Kidney (tissue), 22 donors: ENCODE measurements at regions of chr6 and their contacts with region 1.

Region 1: GRCh38 chr6:16332175-16332542 is 93.8 kb downstream of the GMPR start:
- DNase-seq: peak; percentile 84 to 93 (median 85)
- H3K4me3 ChIP-seq: no peak overlapping the region
- H3K27ac ChIP-seq: peak overlapping the region in 1 of 2 donors; percentile 49
- H3K4me1 ChIP-seq: peaks cover 0 to 5% (median 3%) of the 10 kb centered on the region in 3 donors
- H3K27me3 ChIP-seq: no peaks in the 10 kb centered on the region
- CTCF ChIP-seq: peak; percentile 84

Region 2: DNA sequence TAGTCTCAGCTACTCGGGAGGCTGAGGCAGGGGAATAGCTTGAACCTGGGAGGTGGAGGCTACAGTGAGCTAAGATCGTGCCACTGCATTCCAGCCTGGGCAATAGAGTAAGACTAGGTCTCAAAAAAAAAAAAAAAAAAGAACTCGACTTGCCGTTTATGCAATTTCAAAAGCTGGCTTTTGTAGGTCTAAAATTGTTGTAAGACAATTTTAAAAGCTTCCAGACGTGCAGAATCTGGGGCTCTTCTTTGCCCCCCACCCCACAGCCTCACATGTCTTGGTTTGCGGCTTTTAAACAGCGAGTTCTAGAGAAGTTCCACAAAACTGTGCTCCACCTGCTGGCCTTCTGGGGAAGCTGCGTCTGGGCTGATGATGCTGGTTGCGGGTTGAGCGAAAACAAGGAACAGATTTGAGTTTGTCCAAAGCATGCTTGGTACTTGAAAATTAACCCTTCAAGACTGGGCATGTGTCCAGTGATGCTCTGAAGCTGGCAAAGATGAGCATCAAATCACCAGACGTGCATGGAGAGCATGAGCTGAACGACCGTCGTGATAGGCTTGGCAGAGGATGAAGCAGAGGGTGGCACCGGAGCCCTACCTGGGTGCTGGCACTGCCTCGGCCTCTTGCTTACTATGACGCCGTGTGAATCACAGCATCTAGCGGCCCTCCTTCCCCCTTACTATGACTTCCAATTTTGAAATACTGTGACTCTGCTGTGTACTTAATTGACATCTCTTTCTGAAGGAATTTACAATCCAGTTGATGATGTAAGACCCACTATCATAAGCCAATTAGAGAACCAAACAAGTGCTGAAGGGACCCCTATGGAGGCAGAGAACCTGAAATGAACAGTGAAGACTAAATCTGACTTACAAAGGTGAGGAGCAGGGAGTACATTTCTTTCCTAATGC is 77.6 kb after region 1 on chr6:
- intact Hi-C with region 1: loop called (anchors 5 kb)
- DNase-seq: peak in 4 of 5 donors; percentile 63 to 87 (median 70)
- H3K4me3 ChIP-seq: no peak overlapping the region
- H3K27ac ChIP-seq: no peak overlapping the region
- H3K4me1 ChIP-seq: no peaks in the 10 kb centered on the region
- H3K27me3 ChIP-seq: no peaks in the 10 kb centered on the region
- CTCF ChIP-seq: peak; percentile 80

Region 3: DNA sequence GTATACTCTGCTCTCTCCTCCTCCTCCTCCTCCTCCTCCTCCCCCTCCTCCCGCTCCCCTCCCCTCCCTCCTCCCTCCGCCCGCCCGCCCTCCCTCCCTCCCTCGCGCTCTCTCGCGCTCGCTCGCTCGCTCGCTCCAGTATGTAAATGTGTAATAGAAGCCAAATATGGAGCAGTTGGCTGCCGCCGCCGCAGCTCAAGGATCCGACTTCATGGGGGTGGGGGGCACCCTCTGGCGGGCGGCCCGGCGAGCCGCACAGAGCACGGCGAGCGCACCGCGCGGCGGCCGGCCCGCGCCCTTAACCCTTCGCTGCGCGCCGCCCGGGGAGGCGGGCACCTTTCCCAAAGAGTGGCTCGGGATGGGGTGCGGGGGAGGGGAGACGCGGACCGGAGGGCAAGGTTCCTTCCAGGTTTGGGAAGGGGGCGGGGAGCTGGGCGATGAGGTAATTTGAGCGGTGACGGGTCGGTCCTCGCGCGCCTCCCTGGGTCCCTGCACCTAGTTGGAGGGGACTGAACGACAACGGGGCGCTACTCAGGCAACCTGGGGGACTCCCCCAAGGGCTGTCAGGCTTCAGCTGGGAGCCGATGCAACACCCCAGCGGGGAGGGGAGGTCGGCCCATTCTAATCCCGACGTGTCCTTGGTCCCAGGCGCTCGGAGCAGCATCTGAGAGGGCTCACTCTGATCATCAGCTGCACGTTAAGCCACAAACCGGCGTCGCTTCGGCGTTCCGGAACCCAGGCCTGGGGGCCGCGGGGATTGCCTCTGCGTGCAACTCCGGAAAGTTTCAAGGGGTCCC is 429.5 kb after region 1 on chr6:
- intact Hi-C with region 1: loop called (anchors 10 kb)
- DNase-seq: peak; percentile 91 to 95 (median 94)
- H3K4me3 ChIP-seq: peak overlapping the region; percentile 84 to 90 (median 89)
- H3K27ac ChIP-seq: peak overlapping the region; percentile 89 to 95
- H3K4me1 ChIP-seq: peaks cover 4 to 19% (median 6%) of the 10 kb centered on the region in 3 donors
- H3K27me3 ChIP-seq: no peaks in the 10 kb centered on the region
- CTCF ChIP-seq: peak; percentile 28